Prostate gland (tissue), 2 donors: ENCODE measurements at regions of chr6 and their contacts with region 1.

Region 1: GRCh38 chr6:150079604-150080003 is 10.7 kb upstream of the ULBP3 start:
- DNase-seq: no peak
- H3K4me3 ChIP-seq: no peak overlapping the region
- H3K27ac ChIP-seq: no peak overlapping the region
- H3K4me1 ChIP-seq: no peaks in the 10 kb centered on the region
- H3K27me3 ChIP-seq: peaks cover 2% of the 10 kb centered on the region
- CTCF ChIP-seq: no peak
- POLR2A ChIP-seq: no peak

Region 2: DNA sequence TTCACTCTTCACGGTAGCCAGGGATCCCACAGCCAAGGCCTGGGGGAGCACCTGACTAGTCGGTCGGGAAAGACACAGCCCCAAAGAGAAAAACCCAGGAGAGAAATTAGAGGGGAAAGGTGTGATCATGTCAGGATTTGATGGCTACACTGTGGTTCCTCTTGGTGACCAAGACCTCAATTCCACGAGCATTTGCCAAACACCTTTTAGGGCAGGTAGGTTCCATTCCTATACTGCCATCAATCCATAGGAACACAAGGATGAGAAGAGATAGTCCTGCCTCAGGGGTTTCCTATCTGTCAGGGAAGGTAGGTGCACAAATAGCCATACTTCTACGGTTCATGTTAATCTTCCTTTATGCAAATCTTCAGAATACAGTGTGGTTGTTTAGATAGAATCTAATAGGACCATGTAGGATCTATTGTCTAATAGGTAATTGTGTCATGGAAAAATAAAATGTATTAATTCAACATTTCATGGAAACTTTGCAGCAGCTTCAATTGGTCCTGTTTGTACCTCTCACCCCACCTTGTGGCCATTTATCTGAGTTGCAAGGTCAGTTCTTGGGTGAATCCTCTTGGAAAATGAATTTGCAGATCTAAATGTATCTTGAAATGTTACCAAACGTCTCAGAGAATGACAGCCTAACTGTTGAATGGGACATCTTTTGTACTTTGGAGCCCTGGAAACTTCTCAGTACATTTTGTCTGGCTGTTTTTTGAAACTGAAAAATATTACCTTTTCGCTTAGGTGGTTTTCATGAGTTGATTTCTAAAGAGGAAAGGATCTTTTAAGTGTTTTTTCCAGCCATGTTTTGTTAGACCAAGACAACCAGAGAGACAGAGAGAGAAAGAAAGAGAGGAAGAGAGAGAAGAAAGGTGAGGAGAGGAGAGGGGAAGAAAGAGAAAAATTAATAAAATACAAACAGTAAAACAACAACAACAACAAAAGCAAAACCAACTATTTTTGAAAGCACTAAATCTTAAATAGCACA is 255.5 kb after region 1 on chr6:
- intact Hi-C with region 1: loop called (anchors 2 kb)
- DNase-seq: peak; percentile 33
- H3K4me3 ChIP-seq: no peak overlapping the region
- H3K27ac ChIP-seq: no peak overlapping the region
- H3K4me1 ChIP-seq: no peaks in the 10 kb centered on the region
- H3K27me3 ChIP-seq: no peaks in the 10 kb centered on the region
- CTCF ChIP-seq: peak; percentile 52 to 83 (median 80)
- POLR2A ChIP-seq: no peak

Region 3: GRCh38 chr6:150395398-150396009 is 315.9 kb after region 1 on chr6:
- intact Hi-C with region 1: loop called (anchors 5 kb)
- DNase-seq: peak; percentile 28
- H3K4me3 ChIP-seq: no peak overlapping the region
- H3K27ac ChIP-seq: no peak overlapping the region
- H3K4me1 ChIP-seq: no peaks in the 10 kb centered on the region
- H3K27me3 ChIP-seq: no peaks in the 10 kb centered on the region
- CTCF ChIP-seq: peak; percentile 20 to 74 (median 62)
- POLR2A ChIP-seq: no peak